PC-3 (cell line): ENCODE measurements at regions of chr5 and their contacts with region 1.

Region 1: GRCh38 chr5:30040488-30041118 is 1152.9 kb upstream of the CDH6 start:
- DNase-seq: peak; percentile 83
- ATAC-seq: peak; percentile 82
- H3K4me3 ChIP-seq: no peak overlapping the region
- H3K27ac ChIP-seq: no peak overlapping the region
- H3K4me1 ChIP-seq: peaks cover 19% of the 10 kb centered on the region
- H3K27me3 ChIP-seq: no peaks in the 10 kb centered on the region
- CTCF ChIP-seq: peak; percentile 91

Region 2: DNA sequence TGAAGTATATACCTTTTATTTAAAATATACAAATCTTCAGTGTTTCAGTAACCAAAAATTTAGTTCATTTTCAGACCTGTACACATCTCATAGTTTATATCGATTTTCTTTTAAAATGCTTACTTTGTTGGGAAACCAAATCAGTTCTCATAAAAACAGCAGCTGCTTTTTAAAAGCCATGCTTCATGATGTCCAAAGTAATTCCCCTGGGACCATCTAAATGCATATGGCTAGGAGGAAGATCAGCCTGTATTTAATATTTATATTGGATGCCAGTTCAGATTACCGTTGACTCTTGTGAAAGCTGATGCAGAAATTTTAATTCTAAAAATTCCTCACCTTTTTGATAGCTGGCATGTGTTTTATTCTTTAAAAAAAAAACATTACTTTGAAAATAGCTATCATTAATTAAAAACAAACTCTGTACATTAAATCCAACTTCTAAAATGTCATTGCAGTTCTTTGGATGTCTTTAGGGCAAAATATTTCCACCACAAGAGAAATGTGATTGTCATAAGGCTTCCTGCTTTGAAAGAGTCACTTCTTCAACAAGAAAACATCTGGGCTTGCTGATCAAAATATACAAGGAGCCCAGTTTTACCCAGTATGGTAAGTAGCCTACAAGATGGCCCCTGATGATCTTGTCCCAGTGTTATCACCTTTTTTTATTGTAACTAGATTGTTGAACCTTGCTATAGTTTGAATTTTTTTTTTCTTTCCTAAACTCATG is 90.0 kb before region 1 on chr5:
- CTCF ChIA-PET with region 1: no interaction called
- POLR2A ChIA-PET with region 1: no interaction called
- intact Hi-C with region 1: no loop called
- DNase-seq: no peak
- ATAC-seq: no peak
- H3K4me3 ChIP-seq: no peak overlapping the region
- H3K27ac ChIP-seq: no peak overlapping the region
- H3K4me1 ChIP-seq: no peaks in the 10 kb centered on the region
- H3K27me3 ChIP-seq: no peaks in the 10 kb centered on the region
- CTCF ChIP-seq: no peak

Region 3: GRCh38 chr5:30030110-30030509 is 10.5 kb before region 1 on chr5:
- CTCF ChIA-PET with region 1: no interaction called
- POLR2A ChIA-PET with region 1: no interaction called
- intact Hi-C with region 1: no loop called
- DNase-seq: peak; percentile 42
- ATAC-seq: peak; percentile 96
- H3K4me3 ChIP-seq: no peak overlapping the region
- H3K27ac ChIP-seq: no peak overlapping the region
- H3K4me1 ChIP-seq: peaks cover 11% of the 10 kb centered on the region
- H3K27me3 ChIP-seq: no peaks in the 10 kb centered on the region
- CTCF ChIP-seq: no peak

Region 4: GRCh38 chr5:30357371-30357770 is 316.8 kb after region 1 on chr5:
- CTCF ChIA-PET with region 1: interaction called, 3 read pairs
- POLR2A ChIA-PET with region 1: no interaction called
- intact Hi-C with region 1: loop called (anchors 2 kb)
- DNase-seq: no peak
- ATAC-seq: no peak
- H3K4me3 ChIP-seq: no peak overlapping the region
- H3K27ac ChIP-seq: no peak overlapping the region
- H3K4me1 ChIP-seq: peaks cover 30% of the 10 kb centered on the region
- H3K27me3 ChIP-seq: no peaks in the 10 kb centered on the region
- CTCF ChIP-seq: no peak

Region 5: DNA sequence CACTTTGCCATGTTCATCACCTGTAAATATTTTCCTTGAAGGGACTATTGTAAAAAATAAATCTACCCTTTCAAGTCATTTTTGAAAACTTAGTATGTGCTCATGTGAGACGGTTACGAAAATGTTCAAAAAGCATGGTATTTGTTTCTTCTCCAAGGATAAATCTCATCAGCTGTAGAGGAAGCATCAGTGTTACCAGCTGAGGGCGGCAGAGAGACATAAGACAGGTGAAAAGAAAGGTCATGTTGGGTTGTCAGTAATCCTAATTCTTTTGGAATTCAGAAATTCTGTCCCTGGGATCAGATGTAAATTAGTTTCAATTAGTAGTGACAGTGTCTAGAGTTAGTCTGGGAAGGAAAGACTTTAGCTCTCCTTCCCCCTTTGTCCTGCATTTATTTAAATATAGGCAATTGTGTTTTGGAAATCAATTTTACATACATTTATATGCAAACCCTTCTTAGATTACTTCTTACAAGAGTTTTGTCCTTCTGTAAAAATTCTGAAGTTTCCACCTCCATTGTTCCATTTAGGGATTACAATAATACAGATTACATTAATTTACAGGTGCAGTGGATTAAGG is 361.0 kb after region 1 on chr5:
- CTCF ChIA-PET with region 1: no interaction called
- POLR2A ChIA-PET with region 1: interaction called, 4 read pairs
- intact Hi-C with region 1: loop called (anchors 1 kb)
- DNase-seq: peak; percentile 70
- ATAC-seq: peak; percentile 66
- H3K4me3 ChIP-seq: peak overlapping the region; percentile 37
- H3K27ac ChIP-seq: no peak overlapping the region
- H3K4me1 ChIP-seq: peaks cover 5% of the 10 kb centered on the region
- H3K27me3 ChIP-seq: no peaks in the 10 kb centered on the region
- CTCF ChIP-seq: peak; percentile 91

Region 6: DNA sequence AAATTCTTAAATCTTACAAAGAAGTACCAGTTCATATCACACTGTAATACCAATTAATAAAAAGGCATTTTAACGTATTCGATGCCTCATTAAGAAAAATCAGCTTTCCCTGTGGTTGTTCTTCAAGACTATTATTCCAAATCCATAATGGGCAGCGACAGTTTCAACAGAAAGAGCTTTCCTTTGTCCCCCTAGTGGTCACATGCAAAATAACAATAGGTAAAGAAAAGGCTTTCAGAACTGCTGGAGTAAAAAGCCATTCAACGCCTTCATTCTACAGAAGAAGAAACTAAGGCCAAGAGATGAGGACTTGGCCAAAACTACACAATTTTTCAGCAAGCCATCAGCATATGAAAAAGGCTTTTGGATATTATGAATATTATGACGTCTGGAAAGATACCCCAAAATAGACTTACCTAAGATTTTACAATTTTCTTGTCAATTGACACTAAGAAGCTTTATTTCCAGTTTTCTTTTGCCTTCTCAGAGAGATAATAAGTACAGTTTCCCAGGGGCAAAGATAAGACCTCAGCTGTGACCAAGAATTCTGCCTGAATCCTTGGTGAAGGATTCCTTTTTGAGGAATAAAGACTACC is 1146.2 kb after region 1 on chr5:
- CTCF ChIA-PET with region 1: interaction called, 4 read pairs
- POLR2A ChIA-PET with region 1: no interaction called
- intact Hi-C with region 1: loop called (anchors 2 kb)
- DNase-seq: peak; percentile 59
- ATAC-seq: no peak
- H3K4me3 ChIP-seq: no peak overlapping the region
- H3K27ac ChIP-seq: no peak overlapping the region
- H3K4me1 ChIP-seq: no peaks in the 10 kb centered on the region
- H3K27me3 ChIP-seq: peaks cover 17% of the 10 kb centered on the region
- CTCF ChIP-seq: peak; percentile 86

Region 7: GRCh38 chr5:31232273-31232888 is 1191.8 kb after region 1 on chr5:
- CTCF ChIA-PET with region 1: no interaction called
- POLR2A ChIA-PET with region 1: no interaction called
- intact Hi-C with region 1: loop called (anchors 1 kb)
- DNase-seq: peak; percentile 81
- ATAC-seq: peak; percentile 95
- H3K4me3 ChIP-seq: no peak overlapping the region
- H3K27ac ChIP-seq: no peak overlapping the region
- H3K4me1 ChIP-seq: no peaks in the 10 kb centered on the region
- H3K27me3 ChIP-seq: no peaks in the 10 kb centered on the region
- CTCF ChIP-seq: peak; percentile 91